ENCODE measurements at regions of chr17 and their contacts with region 1.

Region 1: GRCh38 chr17:65556014-65556909 is 5.2 kb downstream of the AXIN2 start:
- DNase-seq: peak; percentile 66
- ATAC-seq: peak; percentile 43
- H3K4me3 ChIP-seq: peak overlapping the region; percentile 13 to 15; a peak in 3 of 4 replicates
- H3K27ac ChIP-seq: peak overlapping the region; percentile 86
- H3K4me1 ChIP-seq: peaks cover 19 to 41% of the 10 kb centered on the region in 2 experiments
- H3K27me3 ChIP-seq: no peaks in the 10 kb centered on the region
- CTCF ChIP-seq: peak; percentile 69 to 99 (median 99)
- POLR2A ChIP-seq: no peak
- RAD21 ChIP-seq: peak; percentile 78

Region 2: DNA sequence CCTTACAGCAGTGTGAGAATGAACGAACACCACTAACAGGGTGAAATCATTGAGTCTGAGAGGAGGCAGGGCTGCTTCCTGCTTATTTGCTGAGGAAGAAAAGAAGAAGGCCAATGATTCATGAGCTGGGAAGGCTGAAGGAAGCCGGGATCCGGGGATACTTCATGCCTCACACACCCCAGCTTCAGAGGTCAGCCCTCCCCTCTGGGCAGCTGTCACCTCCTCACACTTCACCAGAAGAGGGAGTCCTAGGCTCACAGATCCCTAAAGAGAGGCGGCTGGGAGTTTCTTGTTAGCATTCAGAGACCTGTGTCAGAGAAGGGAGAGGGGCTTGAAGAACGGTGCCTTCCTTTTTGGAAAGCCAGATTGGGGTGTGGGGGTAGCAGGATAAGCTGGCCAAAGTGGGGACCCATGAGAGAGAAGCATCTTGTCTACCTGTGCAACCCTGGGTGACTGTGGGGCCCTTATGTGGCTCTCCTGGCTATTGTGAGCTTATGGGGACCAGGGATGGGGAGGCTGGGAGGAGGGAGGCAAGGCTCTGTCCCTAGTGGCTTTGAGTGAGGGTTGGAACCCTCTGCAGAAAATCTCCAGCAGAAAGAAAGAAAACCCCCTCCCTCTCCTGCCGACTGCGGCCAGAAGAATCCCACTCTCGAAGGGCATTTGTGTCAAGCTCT is 324.5 kb before region 1 on chr17:
- CTCF ChIA-PET with region 1: interaction called, 10 read pairs
- POLR2A ChIA-PET with region 1: no interaction called
- RAD21 ChIA-PET with region 1: interaction called in 1 of 2 experiments, 5 read pairs
- intact Hi-C with region 1: loop called (anchors 1 kb)
- DNase-seq: peak; percentile 74
- ATAC-seq: peak; percentile 92
- H3K4me3 ChIP-seq: no peak overlapping the region
- H3K27ac ChIP-seq: no peak overlapping the region
- H3K4me1 ChIP-seq: peaks cover 24 to 32% of the 10 kb centered on the region in 2 experiments
- H3K27me3 ChIP-seq: no peaks in the 10 kb centered on the region
- CTCF ChIP-seq: peak; percentile 88 to 97 (median 95)
- POLR2A ChIP-seq: no peak
- RAD21 ChIP-seq: peak; percentile 98

Region 3: GRCh38 chr17:65294179-65294720 is 262.0 kb before region 1 on chr17:
- CTCF ChIA-PET with region 1: interaction called, 35 read pairs
- POLR2A ChIA-PET with region 1: no interaction called
- RAD21 ChIA-PET with region 1: interaction called in 1 of 2 experiments, 11 read pairs
- intact Hi-C with region 1: loop called (anchors 1 kb)
- DNase-seq: peak; percentile 72
- ATAC-seq: peak; percentile 100
- H3K4me3 ChIP-seq: no peak overlapping the region
- H3K27ac ChIP-seq: no peak overlapping the region
- H3K4me1 ChIP-seq: peaks cover 4 to 16% of the 10 kb centered on the region in 2 experiments; a peak in 3 of 4 replicates
- H3K27me3 ChIP-seq: no peaks in the 10 kb centered on the region
- CTCF ChIP-seq: peak; percentile 88 to 97 (median 96)
- POLR2A ChIP-seq: no peak
- RAD21 ChIP-seq: peak; percentile 98

Region 4: DNA sequence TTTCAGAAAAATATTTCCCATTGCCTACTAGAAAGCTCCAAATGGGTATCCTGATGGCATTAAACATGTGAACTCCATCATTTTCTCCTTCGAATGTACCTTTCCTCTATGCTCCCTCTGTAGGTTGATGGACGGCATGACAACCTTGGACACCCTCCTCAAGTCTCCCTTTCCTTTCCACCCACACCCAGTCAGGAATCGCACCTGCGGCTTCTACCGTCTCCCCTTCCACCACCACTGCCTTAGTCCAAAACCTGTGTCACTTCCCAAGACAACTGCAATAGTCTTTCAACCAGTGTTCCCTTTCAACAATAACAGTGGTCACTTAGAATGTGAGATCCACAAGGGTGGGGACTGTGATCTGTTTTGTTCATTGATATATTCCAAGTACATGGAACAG is 238.3 kb after region 1 on chr17:
- CTCF ChIA-PET with region 1: interaction called, 4 read pairs
- POLR2A ChIA-PET with region 1: no interaction called
- RAD21 ChIA-PET with region 1: no interaction called
- intact Hi-C with region 1: loop called (anchors 5 kb)
- DNase-seq: peak; percentile 48
- ATAC-seq: peak; percentile 84
- H3K4me3 ChIP-seq: no peak overlapping the region
- H3K27ac ChIP-seq: no peak overlapping the region
- H3K4me1 ChIP-seq: 0 out of 4 replicates have a peak, but pooled peaks cover 0 to 3% of the 10 kb centered on the region in 2 experiments
- H3K27me3 ChIP-seq: no peaks in the 10 kb centered on the region
- CTCF ChIP-seq: peak; percentile 54 to 82 (median 75); a peak in 5 of 6 replicates
- POLR2A ChIP-seq: no peak
- RAD21 ChIP-seq: peak; percentile 74

Region 5: GRCh38 chr17:66165513-66166123 is 609.4 kb after region 1 on chr17:
- CTCF ChIA-PET with region 1: interaction called, 3 read pairs
- POLR2A ChIA-PET with region 1: no interaction called
- RAD21 ChIA-PET with region 1: interaction called in 1 of 2 experiments, 3 read pairs
- intact Hi-C with region 1: loop called (anchors 1 kb)
- DNase-seq: peak; percentile 58
- ATAC-seq: peak; percentile 81
- H3K4me3 ChIP-seq: no peak overlapping the region
- H3K27ac ChIP-seq: no peak overlapping the region
- H3K4me1 ChIP-seq: no peaks in the 10 kb centered on the region
- H3K27me3 ChIP-seq: no peaks in the 10 kb centered on the region
- CTCF ChIP-seq: peak; percentile 71 to 93 (median 83)
- POLR2A ChIP-seq: no peak
- RAD21 ChIP-seq: peak; percentile 93

Measured in HCT116 (cell line).